Activated T-helper 1 cell treated with anti-CD3 and anti-CD28 coated beads, Interleukin-12 subunit alpha, Interleukin-12 subunit beta, Interleukin-2, Interleukin-4 antibody, amounts not matched to agents 30 ng/mL and 10 ng/mL and 1 ng/mL, durations not matched to agents 14 hours and 24 hours and 36 hours (primary cell): ENCODE measurements at regions of chr2 and their contacts with region 1.

Region 1: DNA sequence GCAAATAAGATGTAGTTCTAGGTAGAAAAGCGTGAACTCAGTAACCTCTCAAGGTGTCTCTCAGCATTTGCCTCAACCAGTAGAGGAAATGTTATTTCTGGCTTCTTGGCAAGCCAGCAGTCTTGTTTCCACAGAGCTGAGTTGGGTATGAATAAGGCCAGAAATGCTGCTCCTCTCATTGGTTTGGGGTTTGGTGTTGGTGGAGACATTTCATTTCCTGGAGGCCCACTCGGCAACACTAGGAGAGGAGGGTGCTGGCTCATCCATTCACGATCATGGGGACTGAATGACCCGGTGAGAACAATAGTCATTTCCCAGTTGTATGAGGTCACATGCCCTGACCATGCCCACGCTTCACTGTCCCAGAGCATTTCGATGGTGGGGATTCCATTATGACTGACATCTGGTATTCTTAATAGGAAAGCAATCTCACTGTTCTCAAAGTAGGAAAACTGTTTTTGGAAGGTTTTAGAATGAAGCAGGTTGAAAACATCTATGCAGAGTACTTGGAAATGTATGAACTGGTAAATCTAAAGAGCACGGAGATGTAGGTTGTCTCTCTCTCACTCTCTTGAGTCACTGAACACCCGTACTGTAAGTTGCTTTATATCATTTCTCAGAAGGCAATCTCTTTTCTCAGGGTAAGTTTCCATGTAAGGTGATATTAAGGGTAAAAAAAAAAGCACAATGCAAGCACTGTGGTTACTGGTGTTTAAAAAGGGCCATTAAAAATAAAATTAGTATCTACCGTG is 37.1 kb upstream of the CTLA4 start:
- DNase-seq: peak; percentile 32
- H3K4me3 Mint-ChIP-seq: peak overlapping the region; percentile 27
- H3K27ac Mint-ChIP-seq: peak overlapping the region; percentile 87
- H3K4me1 Mint-ChIP-seq: peaks cover 31% of the 10 kb centered on the region
- H3K27me3 Mint-ChIP-seq: no peaks in the 10 kb centered on the region

Region 2: GRCh38 chr2:203718087-203718486 is 112.4 kb before region 1 on chr2:
- intact Hi-C with region 1: no loop called
- DNase-seq: peak; percentile 67
- H3K4me3 Mint-ChIP-seq: peak overlapping the region; percentile 73
- H3K27ac Mint-ChIP-seq: peak overlapping the region; percentile 96
- H3K4me1 Mint-ChIP-seq: peaks cover 96% of the 10 kb centered on the region
- H3K27me3 Mint-ChIP-seq: no peaks in the 10 kb centered on the region

Region 3: DNA sequence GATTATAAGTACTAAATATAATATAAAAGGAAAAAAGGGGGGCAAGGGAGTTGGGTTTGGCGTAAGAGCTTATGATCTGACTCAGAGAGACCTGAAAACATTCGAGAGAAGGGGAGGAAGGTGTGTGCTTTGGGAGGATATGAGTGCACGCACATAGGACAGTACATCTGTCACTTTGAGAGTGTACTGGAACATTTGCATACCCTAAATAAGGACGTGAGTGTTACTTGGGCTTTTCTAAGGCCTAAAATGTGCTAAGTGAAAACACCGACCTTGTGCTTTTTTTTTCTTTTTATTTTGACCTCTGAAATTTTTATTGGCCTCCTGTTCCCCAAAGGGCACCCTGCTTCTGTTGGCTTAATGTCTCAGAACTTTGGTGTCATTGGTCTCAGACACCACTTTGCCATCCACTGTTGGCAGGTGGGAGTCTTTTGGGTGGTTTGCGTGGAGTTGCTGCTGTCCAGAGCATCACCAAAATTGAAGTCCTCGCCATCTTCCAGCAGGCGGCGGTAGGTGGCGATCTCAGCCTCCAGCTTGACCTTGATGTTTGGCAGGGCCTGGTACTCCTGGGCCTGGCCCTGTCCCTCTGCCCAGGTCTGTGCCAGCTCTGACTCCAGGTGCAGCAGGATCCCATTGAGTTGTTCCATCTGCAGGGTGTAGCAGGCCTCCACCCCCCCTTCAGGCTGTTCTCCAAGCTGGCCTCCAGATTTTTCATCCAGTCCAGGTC is 66.4 kb before region 1 on chr2:
- intact Hi-C with region 1: loop called (anchors 1 kb)
- DNase-seq: peak; percentile 20
- H3K4me3 Mint-ChIP-seq: peak overlapping the region; percentile 22
- H3K27ac Mint-ChIP-seq: peak overlapping the region; percentile 95
- H3K4me1 Mint-ChIP-seq: peaks cover 66% of the 10 kb centered on the region
- H3K27me3 Mint-ChIP-seq: no peaks in the 10 kb centered on the region

Region 4: GRCh38 chr2:203858176-203858575 is 27.7 kb after region 1 on chr2:
- intact Hi-C with region 1: loop called (anchors 1 kb)
- DNase-seq: no peak
- H3K4me3 Mint-ChIP-seq: no peak overlapping the region
- H3K27ac Mint-ChIP-seq: no peak overlapping the region
- H3K4me1 Mint-ChIP-seq: peaks cover 76% of the 10 kb centered on the region
- H3K27me3 Mint-ChIP-seq: no peaks in the 10 kb centered on the region

Region 5: GRCh38 chr2:203893401-203893800 is 62.9 kb after region 1 on chr2:
- intact Hi-C with region 1: loop called (anchors 1 kb)
- DNase-seq: no peak
- H3K4me3 Mint-ChIP-seq: no peak overlapping the region
- H3K27ac Mint-ChIP-seq: peak overlapping the region; percentile 89
- H3K4me1 Mint-ChIP-seq: peaks cover 73% of the 10 kb centered on the region
- H3K27me3 Mint-ChIP-seq: no peaks in the 10 kb centered on the region

Region 6: GRCh38 chr2:204005940-204006721 is 175.7 kb after region 1 on chr2:
- intact Hi-C with region 1: loop called (anchors 2 kb)
- DNase-seq: no peak
- H3K4me3 Mint-ChIP-seq: no peak overlapping the region
- H3K27ac Mint-ChIP-seq: peak overlapping the region; percentile 85
- H3K4me1 Mint-ChIP-seq: peaks cover 91% of the 10 kb centered on the region
- H3K27me3 Mint-ChIP-seq: no peaks in the 10 kb centered on the region